Activated naive CD4-positive, alpha-beta T cell treated with anti-CD3 and anti-CD28 coated beads for 36 hours (primary cell): ENCODE measurements at regions of chr19 and their contacts with region 1.

Region 1: DNA sequence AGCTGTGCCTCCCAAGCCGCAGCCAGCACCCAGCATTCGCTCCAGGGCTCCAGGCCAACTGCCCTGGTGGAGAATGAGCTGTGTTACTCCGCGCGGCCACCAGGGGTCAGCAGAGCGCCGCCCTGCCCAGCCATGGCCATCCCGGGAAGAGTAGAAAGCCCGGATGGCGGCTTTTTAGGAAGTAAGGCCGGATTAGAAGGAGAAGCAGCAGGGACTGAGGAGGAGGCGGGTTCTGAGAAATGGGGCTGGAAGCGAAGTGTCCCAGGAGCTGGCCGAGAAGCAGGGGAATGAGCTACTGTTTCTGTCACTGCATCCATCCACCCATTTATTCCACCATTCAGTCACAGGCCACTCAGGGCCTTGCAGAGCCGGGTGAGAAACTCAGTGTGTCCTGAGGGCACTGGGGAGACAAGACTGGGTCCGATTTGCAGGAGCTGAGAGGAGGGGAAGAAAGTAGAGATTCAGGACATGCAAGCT is 6.6 kb upstream of the NPAS1 start:
- DNase-seq: peak; percentile 75
- H3K4me3 Mint-ChIP-seq: no peak overlapping the region
- H3K27ac Mint-ChIP-seq: no peak overlapping the region
- H3K4me1 Mint-ChIP-seq: peaks cover 9% of the 10 kb centered on the region
- H3K27me3 Mint-ChIP-seq: peaks cover 5% of the 10 kb centered on the region

Region 2: GRCh38 chr19:46860125-46860845 is 152.8 kb before region 1 on chr19:
- CTCF ChIA-PET with region 1: interaction called, 10 read pairs
- intact Hi-C with region 1: no loop called
- DNase-seq: peak; percentile 97
- H3K4me3 Mint-ChIP-seq: peak overlapping the region; percentile 84
- H3K27ac Mint-ChIP-seq: peak overlapping the region; percentile 87
- H3K4me1 Mint-ChIP-seq: peaks cover 21% of the 10 kb centered on the region
- H3K27me3 Mint-ChIP-seq: no peaks in the 10 kb centered on the region

Region 3: GRCh38 chr19:47035127-47036096 is 22.3 kb after region 1 on chr19:
- CTCF ChIA-PET with region 1: interaction called, 20 read pairs
- intact Hi-C with region 1: loop called (anchors 1 kb)
- DNase-seq: peak; percentile 97
- H3K4me3 Mint-ChIP-seq: peak overlapping the region; percentile 81
- H3K27ac Mint-ChIP-seq: peak overlapping the region; percentile 43
- H3K4me1 Mint-ChIP-seq: peaks cover 19% of the 10 kb centered on the region
- H3K27me3 Mint-ChIP-seq: peaks cover 8% of the 10 kb centered on the region

Region 4: GRCh38 chr19:47124937-47125668 is 112.0 kb after region 1 on chr19:
- CTCF ChIA-PET with region 1: interaction called, 26 read pairs
- intact Hi-C with region 1: loop called (anchors 1 kb)
- DNase-seq: no peak
- H3K4me3 Mint-ChIP-seq: no peak overlapping the region
- H3K27ac Mint-ChIP-seq: no peak overlapping the region
- H3K4me1 Mint-ChIP-seq: peaks cover 5% of the 10 kb centered on the region
- H3K27me3 Mint-ChIP-seq: no peaks in the 10 kb centered on the region

Region 5: GRCh38 chr19:47143322-47144073 is 130.4 kb after region 1 on chr19:
- CTCF ChIA-PET with region 1: interaction called, 13 read pairs
- intact Hi-C with region 1: no loop called
- DNase-seq: no peak
- H3K4me3 Mint-ChIP-seq: no peak overlapping the region
- H3K27ac Mint-ChIP-seq: peak overlapping the region; percentile 39
- H3K4me1 Mint-ChIP-seq: peaks cover 76% of the 10 kb centered on the region
- H3K27me3 Mint-ChIP-seq: no peaks in the 10 kb centered on the region

Region 6: DNA sequence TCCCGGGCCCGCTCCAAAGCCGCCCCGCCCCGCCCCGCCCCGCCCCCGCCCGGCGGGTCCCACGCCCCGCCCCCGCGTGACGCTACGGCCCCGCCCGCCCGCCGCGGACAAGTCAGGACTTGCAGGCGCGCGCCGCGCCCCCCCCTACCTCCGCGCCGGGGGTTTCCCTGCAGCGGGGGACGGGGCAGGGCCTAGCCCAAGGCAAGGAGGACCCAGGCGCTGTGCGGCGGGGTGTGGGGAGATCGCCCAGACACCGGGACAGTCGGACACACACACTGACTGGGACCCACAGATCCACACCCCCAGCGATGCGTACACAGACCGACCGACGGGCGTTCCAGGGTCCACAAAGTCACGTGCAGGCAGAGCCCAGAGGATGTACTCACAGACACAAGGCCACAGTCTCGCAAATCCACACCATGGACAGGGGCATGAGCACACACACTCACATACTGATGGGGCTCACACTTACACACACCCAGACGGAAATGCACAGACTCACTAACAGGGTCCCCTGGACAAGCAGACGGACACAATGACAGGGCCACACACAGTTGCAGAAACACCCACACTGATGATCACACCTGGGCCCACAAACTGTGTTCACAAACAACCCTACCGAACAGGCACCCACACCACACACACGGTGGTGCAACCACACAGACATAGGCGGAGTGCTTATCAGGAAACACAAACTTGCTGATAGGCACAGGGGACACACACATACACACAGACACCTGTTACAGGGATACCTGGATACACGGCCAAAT is 218.3 kb after region 1 on chr19:
- CTCF ChIA-PET with region 1: no interaction called
- intact Hi-C with region 1: no loop called
- DNase-seq: peak; percentile 95
- H3K4me3 Mint-ChIP-seq: peak overlapping the region; percentile 77
- H3K27ac Mint-ChIP-seq: peak overlapping the region; percentile 87
- H3K4me1 Mint-ChIP-seq: peaks cover 22% of the 10 kb centered on the region
- H3K27me3 Mint-ChIP-seq: no peaks in the 10 kb centered on the region